ENCODE measurements at regions of chr3 and their contacts with region 1.

Region 1: GRCh38 chr3:148861277-148861869 is 3.7 kb upstream of the CPA3 start:
- DNase-seq: no peak
- ATAC-seq: peak in 1 of 2 donors; percentile 43

Region 2: DNA sequence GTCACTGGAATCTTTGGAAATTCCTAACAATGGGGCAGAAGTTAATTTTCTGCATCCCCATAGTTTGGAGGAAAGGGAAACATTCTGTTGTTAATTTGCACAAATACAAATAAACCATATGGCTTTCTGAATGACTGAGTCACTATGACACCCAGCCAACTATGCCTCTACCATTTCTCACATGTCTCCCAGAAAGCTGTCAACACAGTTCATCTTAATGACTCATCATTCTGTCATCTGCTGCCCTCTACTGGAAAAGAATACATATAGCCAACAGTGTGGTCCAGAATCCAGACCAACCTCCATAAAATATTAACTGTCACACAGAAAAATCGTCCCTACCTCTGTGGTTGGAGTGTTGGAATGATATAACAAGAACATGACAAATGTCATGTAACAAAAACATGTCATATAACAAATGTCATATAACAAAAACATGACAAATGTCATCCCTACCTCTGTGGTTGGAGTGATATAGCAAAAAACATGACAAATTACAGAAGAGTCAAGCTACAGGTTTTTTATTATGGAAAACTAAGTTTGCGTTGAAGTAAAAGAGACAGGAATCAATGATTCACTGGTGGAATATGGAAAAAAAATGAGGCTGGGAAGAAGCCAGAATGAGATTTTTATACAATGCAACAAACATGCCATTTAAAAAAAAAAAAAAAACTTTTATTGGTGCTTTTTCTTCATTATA is 82.3 kb after region 1 on chr3:
- intact Hi-C with region 1: loop called (anchors 5 kb)
- DNase-seq: no peak
- ATAC-seq: peak; percentile 92 to 94